GM13976 (cell line): ENCODE measurements at regions of chr5 and their contacts with region 1.

Region 1: DNA sequence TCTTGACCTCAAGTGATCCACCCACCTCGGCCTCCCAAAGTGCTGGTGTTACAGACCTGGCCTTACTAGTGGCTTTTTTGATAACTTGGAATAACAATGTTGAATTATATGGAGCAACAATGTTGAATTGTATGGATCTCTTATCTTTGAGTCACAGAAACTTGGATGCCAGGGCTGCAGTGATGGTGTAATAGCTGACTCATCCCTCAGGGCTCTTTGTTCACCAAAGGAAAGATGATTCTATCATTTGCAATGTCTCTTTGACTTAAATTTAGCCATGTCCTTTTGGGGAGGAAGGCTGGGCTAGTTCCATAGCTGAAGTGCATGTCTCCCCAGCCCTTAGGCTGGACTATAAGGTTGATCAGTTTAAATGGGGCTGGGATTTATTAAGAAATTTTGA is 172.3 kb downstream of the PDZD2 start:
- DNase-seq: no peak
- CTCF ChIP-seq: no peak

Region 2: GRCh38 chr5:31119938-31120641 is 691.1 kb before region 1 on chr5:
- in situ Hi-C with region 1: no loop called
- DNase-seq: no peak
- CTCF ChIP-seq: no peak

Region 3: GRCh38 chr5:31581498-31582099 is 229.6 kb before region 1 on chr5:
- in situ Hi-C with region 1: loop called (anchors 10 kb)
- DNase-seq: peak; percentile 28
- CTCF ChIP-seq: peak; percentile 14